ENCODE measurements at regions of chr12 and their contacts with region 1.

Region 1: DNA sequence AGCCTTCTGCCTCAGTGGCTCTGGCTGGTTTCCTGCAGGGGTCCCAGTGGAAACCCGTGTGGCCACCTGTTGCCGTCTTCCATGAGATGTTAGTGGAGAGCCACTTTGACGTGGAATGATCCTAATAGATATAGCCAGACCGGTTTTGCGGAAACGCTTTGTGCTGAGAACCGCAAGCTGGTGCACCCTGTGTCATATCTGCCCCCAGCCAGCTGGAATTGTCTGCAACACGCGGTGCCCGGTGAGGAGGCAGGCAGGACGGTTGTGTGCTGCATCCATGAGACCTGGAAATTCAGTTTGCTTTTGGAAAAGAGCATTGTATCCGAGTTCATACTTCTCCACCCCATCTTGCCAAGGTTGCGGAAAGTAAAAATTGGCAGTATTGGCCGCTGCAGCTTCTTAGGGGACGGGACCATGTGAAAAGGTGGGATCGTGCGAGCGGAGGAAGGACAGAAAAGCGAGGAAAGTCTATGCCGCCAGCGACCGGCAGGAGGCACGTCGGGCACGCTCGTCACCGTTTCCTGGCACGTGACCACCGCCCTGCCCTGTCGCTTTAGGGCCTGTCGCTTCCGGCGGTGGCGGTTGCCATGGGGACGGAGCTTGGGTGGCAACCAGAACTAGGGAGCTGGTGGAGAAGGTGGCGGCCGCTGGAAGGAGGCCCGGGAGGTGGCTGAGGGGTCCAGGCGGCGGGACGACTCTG is at the start of gene CFAP251:
- H3K4me3 Mint-ChIP-seq: peak within 1 kb of the TSS; percentile 76
- H3K27ac Mint-ChIP-seq: peak within 1 kb of the TSS; percentile 78
- H3K4me1 Mint-ChIP-seq: peaks cover 33% of the 10 kb centered on the region
- H3K27me3 Mint-ChIP-seq: no peaks in the 10 kb centered on the region

Region 2: DNA sequence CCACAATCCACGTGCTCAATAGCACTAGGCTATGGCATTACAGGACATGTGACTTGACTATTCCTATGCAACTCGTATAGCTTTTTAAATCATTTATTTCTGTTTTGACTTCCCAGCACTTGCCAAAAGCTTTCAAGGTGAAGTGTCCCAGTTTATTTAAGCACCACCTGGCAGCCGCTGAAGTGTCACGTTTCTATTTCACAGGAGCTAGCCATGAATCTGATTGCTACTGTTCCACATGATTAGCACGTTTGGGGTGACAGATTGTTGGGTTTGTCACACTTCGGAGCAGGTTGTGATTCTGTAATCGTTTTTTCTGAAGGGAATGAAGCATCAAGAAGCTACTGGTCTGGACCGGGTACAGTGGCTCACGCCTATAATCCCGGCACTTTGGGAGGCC is 1969.0 kb before region 1 on chr12:
- intact Hi-C with region 1: no loop called
- H3K4me3 Mint-ChIP-seq: no peak overlapping the region
- H3K27ac Mint-ChIP-seq: no peak overlapping the region
- H3K4me1 Mint-ChIP-seq: no peaks in the 10 kb centered on the region
- H3K27me3 Mint-ChIP-seq: peaks cover 2% of the 10 kb centered on the region

Region 3: DNA sequence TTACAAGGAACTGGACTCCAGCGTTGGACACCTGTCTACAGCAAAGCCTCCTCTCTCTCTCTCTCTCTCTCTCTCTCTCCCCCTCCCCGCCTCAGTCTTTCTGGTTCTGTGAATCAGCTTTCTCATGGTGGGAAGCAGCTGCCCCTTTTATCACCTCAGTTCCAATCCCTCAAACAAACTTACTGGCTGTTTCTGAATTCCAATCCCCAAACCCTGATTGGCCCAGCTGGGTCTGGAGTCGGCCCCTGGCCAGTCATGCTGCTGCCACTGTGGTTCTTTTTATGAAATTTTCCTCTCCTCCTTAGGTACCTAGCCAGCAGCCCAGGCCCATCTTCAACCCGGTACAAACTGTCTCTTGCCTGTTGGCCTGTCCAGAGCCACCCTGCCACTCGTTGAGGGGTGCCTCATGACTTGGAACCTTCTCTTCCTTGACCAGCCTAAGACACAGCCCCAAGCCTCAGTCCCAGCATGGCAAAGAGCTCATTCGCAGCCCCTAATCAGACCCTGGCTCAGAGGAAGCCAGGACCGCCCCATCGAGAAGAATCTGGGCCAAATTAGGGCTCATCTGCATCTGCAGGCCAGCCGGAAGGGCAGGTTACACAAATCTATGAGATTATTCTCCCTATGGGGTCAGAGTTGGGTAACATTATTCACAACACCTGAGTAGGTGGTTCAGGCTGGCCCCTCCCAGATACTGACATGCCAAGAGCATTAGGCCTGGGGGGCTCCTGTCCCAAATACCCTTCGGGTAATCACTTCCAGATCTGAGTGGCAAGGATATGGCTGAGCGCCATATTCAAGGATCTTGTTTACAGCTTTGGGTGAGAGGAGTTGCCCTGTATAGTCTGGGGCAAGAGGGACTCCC is 239.2 kb before region 1 on chr12:
- intact Hi-C with region 1: no loop called
- H3K4me3 Mint-ChIP-seq: no peak overlapping the region
- H3K27ac Mint-ChIP-seq: no peak overlapping the region
- H3K4me1 Mint-ChIP-seq: peaks cover 7% of the 10 kb centered on the region
- H3K27me3 Mint-ChIP-seq: no peaks in the 10 kb centered on the region

Region 4: DNA sequence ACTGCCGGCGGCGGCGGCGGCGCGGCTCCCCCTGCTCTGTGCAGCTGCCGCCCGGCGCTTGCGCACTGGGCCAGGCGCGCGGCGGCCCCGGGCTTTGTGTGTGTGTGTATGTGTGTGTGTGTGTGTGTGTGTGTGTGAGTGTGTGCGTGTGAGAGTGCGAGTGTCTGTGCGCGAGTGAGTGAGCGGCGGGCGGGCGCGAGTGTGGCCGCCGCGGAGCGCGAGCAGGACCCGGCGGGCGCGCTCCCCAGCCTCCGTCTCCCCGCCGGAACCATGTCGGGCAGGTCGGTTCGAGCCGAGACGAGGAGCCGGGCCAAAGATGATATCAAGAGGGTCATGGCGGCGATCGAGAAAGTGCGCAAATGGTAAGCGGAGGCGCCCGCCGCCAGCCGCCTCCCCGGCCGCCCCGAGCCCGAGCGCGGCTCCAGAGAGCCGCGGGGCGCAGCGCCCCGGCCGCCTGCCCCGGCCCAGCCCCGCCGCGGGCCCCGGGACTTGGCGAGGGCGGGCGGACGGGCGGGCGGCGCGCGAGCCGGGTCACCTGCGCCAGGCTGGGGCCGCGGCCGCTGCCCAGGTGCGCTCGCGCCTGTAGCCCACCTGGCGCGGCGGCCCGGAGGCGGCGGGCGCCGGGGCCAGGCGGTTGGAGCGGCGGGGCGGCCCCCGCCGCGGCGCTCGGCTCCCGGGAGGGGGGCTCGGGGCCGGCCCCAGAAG is 103.8 kb after region 1 on chr12 and contains the start of gene BCL7A:
- intact Hi-C with region 1: loop called (anchors 5 kb)
- H3K4me3 Mint-ChIP-seq: peak within 1 kb of the TSS; percentile 96
- H3K27ac Mint-ChIP-seq: peak within 1 kb of the TSS; percentile 92
- H3K4me1 Mint-ChIP-seq: peaks cover 30% of the 10 kb centered on the region
- H3K27me3 Mint-ChIP-seq: peaks cover 36% of the 10 kb centered on the region

Measured in dendritic cell treated with granulocyte-macrophage colony-stimulating factor and Interleukin-4, amounts not matched to agents 40 ng/mL and 50 ng/mL, for 4 days (primary cell).